ENCODE measurements at regions of chr2 and their contacts with region 1.

Region 1: GRCh38 chr2:224802407-224802806 is 86.2 kb upstream of the CCDC195 start:
- DNase-seq: no peak
- H3K4me3 Mint-ChIP-seq: no peak overlapping the region
- H3K27ac Mint-ChIP-seq: no peak overlapping the region
- H3K4me1 Mint-ChIP-seq: no peaks in the 10 kb centered on the region
- H3K27me3 Mint-ChIP-seq: no peaks in the 10 kb centered on the region

Region 2: GRCh38 chr2:224813578-224813977 is 11.2 kb after region 1 on chr2:
- intact Hi-C with region 1: loop called (anchors 1 kb)
- DNase-seq: no peak
- H3K4me3 Mint-ChIP-seq: no peak overlapping the region
- H3K27ac Mint-ChIP-seq: no peak overlapping the region
- H3K4me1 Mint-ChIP-seq: no peaks in the 10 kb centered on the region
- H3K27me3 Mint-ChIP-seq: no peaks in the 10 kb centered on the region

Region 3: DNA sequence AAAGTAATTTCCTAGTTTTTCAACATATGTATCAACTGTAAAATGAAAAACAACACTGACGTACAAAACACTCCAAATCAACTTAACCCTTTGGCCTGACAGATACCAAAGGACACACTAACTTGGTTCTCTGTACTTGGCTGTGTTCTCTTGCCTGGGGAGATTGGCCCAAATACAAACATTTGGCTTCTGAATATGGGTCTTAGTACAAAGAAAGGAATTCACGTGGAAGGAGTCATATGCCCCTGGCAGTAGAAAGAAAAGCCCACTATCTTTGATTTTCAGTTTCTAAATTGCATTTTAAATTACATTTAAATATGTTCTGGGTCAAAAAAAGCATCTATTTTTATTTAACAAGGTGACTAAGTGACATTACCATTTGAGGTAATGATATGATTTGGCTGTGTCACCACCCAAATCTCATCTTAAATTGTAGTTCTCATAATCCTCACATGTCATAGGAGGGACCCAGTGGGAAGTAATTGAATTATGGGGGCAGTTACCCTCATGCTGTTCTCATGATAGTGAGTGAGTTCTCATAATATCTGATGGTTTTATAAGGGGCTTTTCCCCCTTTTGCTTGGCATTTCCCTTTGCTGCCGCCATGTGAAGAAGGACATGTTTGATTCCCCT is 67.3 kb after region 1 on chr2:
- intact Hi-C with region 1: loop called (anchors 10 kb)
- DNase-seq: no peak
- H3K4me3 Mint-ChIP-seq: no peak overlapping the region
- H3K27ac Mint-ChIP-seq: no peak overlapping the region
- H3K4me1 Mint-ChIP-seq: no peaks in the 10 kb centered on the region
- H3K27me3 Mint-ChIP-seq: no peaks in the 10 kb centered on the region

Measured in activated T-helper 1 cell treated with anti-CD3 and anti-CD28 coated beads, Interleukin-12 subunit alpha, Interleukin-12 subunit beta, Interleukin-2, Interleukin-4 antibody, amounts not matched to agents 30 ng/mL and 10 ng/mL and 1 ng/mL, durations not matched to agents 14 hours and 24 hours and 36 hours (primary cell).